Left cardiac atrium (tissue), 4 donors: ENCODE measurements at regions of chr2 and their contacts with region 1.

Region 1: DNA sequence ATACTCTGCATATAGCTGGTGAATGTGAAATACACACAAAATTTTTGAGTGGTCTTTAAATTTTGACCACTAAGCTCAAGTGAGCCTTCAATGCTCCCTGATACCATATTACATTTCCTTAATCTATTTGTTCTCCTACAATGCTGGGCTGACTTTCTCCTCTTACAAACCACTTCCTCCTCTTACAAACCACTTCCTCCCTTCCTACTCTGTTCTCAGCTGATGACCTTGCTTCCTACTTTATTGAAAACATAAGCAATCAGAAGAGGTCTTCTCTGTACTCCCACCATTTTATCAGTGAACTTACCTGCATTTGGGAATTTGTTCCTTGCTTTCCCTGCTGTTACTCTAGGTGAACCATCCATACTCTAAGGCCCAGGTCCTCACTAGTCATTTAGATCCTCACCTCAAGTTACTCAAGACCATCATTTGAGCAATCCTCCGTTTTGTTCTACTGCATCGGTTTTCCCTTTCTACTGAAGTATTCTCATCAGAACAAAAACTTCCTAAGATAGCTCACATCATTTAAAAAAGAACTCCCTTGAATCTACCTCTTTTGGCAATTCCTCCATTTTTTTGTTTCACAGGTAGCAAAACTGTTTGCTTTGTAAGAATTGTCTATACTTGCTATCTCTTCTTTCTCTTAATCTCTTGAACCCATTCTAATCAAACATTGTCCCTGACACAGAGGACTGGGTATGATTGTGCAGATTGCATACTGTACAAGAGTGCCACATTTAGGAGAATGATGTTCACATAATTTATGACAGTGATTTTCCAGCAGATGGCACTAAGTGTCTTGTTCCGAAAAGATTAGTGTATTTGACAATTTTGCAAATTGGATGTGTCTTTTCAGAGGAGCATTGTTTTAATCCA is 96.5 kb downstream of the EPB41L5 start:
- DNase-seq: no peak
- ATAC-seq: peak in 1 of 2 donors; percentile 48

Region 2: GRCh38 chr2:120252225-120253021 is 143.0 kb after region 1 on chr2 and contains the start of gene RALB:
- intact Hi-C with region 1: no loop called
- DNase-seq: peak; percentile 100
- ATAC-seq: peak; percentile 96
- total RNA-seq, gene RALB: 52.5 to 54.7 TPM

Region 3: DNA sequence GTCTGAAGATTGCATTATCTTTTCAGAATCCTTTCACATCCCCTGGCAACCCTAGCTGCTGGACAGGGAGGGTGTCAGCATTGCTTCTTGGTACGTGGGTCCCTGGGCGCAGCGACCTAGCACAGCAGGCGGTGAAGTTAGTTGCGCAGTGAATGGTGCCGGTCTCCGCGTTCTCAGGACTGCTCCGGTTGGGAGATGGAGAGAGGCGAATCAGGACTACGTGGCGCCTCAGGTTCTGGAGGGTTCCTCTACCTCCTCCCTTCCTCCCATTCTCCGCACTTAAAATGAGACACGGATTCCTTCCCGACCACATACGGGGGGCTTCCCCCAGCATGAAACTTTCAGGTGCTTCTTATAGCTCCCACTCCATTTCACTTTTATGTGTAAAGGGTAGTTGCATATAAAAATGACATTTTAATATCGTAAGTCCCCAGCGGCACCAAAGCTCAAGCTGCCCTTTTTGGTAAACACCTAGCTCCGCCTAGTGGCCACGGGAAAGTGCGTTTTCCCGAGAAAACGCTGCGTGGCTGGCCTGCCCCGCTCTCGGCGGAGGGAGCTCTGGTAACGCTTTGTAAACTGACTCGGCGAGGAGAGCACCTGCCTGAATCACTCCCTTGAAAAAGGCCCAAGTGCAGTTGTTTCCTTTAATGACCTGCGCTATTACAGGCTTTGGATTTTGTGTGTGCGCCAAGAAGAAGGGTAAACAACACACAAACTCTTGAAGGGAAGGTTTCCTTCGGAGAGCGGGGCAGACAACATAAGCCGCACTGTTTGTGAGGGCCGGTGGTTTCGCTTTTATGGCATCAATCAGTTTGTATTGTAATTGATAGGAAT is 203.7 kb after region 1 on chr2:
- intact Hi-C with region 1: loop called in 1 of 2 experiments (anchors 5 kb)
- DNase-seq: peak; percentile 80
- ATAC-seq: peak; percentile 83 to 86